Activated CD8-positive, alpha-beta memory T cell treated with anti-CD3 and anti-CD28 coated beads, Interleukin-2, amount 10 ng/mL, durations not matched to agents 7 days and 5 days (primary cell): ENCODE measurements at regions of chr1 and their contacts with region 1.

Region 1: DNA sequence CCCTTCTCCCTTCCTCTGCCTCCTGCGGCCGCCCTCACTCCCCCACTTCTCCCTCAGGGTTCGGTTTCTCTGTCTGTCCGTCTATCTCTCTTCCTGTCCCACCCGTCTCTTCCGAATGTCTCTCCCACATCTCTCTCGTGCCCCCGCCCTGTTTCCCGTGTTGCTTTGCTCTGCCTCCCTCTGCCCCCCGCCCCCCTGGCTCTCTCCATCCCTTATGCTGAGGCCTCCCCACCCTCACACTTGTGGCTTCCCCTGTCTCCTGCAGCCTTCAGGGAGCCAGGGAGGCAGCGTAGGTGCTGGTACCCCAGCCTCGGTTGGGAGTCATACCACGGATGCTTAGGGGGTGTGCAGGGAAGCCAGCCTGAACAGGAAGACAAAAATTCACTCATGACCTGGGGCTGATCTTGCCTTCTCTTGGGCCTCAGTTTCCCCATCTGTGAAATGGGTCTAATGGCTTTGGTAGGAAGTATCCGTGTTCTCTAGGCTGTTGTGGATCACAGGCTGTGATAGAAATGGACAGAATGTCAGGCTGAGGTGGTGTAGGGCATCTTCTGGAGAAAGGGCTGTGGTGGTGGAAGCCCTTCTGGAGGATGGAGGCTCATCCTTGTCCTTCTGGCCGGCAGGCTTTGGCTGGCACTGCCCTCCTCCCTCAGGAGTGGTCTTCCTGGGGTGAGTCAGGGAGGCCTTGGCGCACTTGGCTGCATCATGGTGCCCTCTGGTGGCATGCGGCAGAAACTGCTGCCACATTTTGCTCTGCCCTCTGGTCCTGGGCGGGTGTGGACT is 55.5 kb downstream of the FOXO6 start:
- DNase-seq: peak; percentile 67
- ATAC-seq: no peak
- H3K4me3 Mint-ChIP-seq: no peak overlapping the region
- H3K27ac Mint-ChIP-seq: no peak overlapping the region
- H3K4me1 Mint-ChIP-seq: no peaks in the 10 kb centered on the region
- H3K27me3 Mint-ChIP-seq: no peaks in the 10 kb centered on the region

Region 2: GRCh38 chr1:41282679-41283317 is 133.9 kb before region 1 on chr1:
- CTCF ChIA-PET with region 1: interaction called, 19 read pairs
- DNase-seq: no peak
- ATAC-seq: peak; percentile 55
- H3K4me3 Mint-ChIP-seq: no peak overlapping the region
- H3K27ac Mint-ChIP-seq: no peak overlapping the region
- H3K4me1 Mint-ChIP-seq: no peaks in the 10 kb centered on the region
- H3K27me3 Mint-ChIP-seq: peaks cover 42% of the 10 kb centered on the region

Region 3: DNA sequence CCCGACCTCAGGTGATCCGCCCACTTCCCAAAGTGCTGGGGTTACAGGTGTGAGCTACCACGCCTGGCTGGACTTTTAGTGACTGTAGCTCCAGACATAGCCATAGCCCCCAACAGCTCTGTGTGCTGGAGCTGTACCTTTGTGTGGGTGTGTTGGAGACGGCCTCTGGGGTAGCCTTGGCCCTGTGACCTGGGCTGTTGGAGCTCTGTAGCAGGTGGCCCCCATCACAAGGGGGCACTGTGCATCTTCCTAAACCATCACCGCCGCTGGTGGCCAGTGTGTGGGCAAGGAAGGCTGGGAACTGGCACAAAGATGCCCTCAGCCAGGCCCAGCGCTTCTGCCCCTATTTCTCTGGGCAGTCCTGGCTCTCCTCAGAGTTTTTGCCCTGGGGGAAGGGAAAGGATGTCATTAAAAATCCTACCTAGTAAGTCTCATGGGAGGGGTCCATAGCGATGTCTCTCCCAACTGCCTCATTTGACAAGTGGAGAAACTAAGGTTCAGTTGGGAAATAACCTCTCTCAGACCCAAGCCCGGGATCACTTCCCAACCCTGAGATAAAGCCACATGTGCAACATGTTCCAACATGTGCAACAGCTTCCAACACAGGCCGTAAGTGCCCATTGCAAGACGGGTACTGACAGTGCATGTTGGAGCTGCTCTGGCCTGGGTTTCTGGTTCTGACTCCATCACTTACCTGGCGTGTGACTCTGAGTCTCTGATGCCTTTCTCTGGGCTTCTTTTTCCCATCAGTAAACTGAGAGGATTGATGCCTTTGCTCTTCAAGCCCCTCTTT is 93.7 kb before region 1 on chr1:
- CTCF ChIA-PET with region 1: interaction called, 14 read pairs
- DNase-seq: peak; percentile 52
- ATAC-seq: peak; percentile 71
- H3K4me3 Mint-ChIP-seq: no peak overlapping the region
- H3K27ac Mint-ChIP-seq: no peak overlapping the region
- H3K4me1 Mint-ChIP-seq: no peaks in the 10 kb centered on the region
- H3K27me3 Mint-ChIP-seq: no peaks in the 10 kb centered on the region

Region 4: GRCh38 chr1:41474490-41475271 is 57.9 kb after region 1 on chr1:
- CTCF ChIA-PET with region 1: no interaction called
- DNase-seq: no peak
- ATAC-seq: no peak
- H3K4me3 Mint-ChIP-seq: no peak overlapping the region
- H3K27ac Mint-ChIP-seq: no peak overlapping the region
- H3K4me1 Mint-ChIP-seq: no peaks in the 10 kb centered on the region
- H3K27me3 Mint-ChIP-seq: peaks cover 10% of the 10 kb centered on the region